Activated CD4-positive, alpha-beta T cell treated with anti-CD3 and anti-CD28 coated beads for 36 hours (primary cell): ENCODE measurements at regions of chr11 and their contacts with region 1.

Region 1: DNA sequence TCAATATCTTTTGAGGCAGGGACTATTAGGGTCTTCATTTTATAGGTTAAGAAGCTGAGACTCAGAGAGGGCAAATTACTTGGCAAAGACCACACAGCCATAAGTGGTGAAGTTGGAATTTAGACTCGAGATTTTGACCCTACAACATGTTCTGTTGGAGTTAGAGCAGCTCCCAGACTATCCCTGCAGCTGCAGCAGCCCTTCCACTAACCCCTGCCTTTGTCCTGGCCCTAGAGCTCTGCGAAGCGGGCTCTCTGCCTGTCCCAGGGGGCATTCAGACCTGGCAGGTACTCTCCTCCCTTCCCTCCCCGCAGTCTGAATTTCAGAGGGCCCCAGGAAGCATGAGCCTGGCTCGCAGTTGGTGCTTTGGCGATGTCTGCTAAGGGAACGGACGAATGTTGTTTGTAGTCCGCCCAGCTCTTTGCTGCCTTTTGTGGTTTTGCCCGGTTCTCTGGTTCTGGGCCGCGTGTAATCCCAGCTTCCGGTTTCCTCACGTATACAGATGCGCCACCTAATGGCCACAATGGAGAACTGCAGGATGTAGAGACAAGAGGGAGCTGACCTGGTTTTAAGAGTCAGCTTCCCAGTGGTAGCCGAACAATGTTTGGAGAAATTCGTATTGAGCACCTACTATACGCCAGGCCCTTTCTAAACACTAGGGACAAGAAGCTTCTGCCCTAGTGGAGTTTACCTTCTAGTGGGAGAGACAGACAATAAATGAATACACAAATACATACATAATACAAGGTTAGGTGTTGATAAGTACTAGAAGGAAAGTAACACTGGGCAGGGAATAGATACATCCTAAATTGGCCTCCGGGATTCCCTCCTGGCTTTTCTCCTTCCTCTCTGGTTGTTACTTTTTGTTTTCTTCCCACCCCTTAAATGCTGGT is 125.2 kb downstream of the ST3GAL4 start:
- DNase-seq: peak; percentile 83
- ATAC-seq: peak; percentile 83
- H3K4me3 Mint-ChIP-seq: no peak overlapping the region
- H3K27ac Mint-ChIP-seq: peak overlapping the region; percentile 81
- H3K4me1 Mint-ChIP-seq: peaks cover 12% of the 10 kb centered on the region
- H3K27me3 Mint-ChIP-seq: no peaks in the 10 kb centered on the region

Region 2: DNA sequence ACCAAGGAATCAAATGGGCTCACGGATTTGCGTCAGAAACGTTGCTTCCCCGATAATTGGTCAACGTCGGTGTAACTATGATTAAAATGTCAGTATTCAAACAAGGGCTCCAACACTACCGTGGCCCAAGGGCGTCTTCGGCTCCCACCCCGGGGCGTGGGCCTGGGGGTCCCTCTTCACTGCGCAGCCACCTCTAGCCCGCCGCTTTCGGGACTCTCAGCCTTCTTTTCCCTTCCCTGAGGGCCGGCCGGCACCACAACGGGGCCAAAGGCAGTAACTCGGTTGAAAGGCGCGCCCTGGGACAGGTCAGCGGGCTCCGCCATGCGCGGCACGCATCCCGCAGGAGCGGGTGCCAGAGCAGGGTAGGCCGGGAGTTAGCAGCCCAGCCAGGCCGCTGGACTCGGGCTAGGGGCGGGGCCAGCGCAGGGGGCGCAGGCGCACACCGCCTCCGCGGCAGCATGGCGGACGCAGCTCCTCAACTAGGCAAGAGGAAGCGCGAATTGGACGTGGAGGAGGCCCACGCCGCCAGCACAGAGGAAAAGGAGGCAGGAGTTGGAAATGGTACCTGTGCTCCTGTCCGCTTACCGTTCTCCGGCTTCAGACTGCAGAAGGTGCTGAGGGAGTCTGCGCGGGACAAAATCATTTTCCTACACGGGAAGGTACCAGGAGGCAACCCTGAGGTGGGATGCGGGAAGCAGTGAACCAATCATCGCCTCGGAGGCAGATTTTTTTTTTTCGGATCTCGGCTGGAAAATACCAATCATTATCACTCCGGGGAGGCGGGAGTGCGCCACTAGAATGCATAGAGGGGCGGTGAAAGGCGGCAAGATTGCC is 176.8 kb before region 1 on chr11 and contains the start of gene DCPS:
- CTCF ChIA-PET with region 1: interaction called, 10 read pairs
- POLR2A ChIA-PET with region 1: no interaction called
- intact Hi-C with region 1: no loop called
- DNase-seq: peak; percentile 92
- ATAC-seq: peak; percentile 93
- H3K4me3 Mint-ChIP-seq: peak within 1 kb of the TSS; percentile 85
- H3K27ac Mint-ChIP-seq: peak within 1 kb of the TSS; percentile 98
- H3K4me1 Mint-ChIP-seq: peaks cover 32% of the 10 kb centered on the region
- H3K27me3 Mint-ChIP-seq: no peaks in the 10 kb centered on the region
- total RNA-seq, gene DCPS: 29.7 to 39.3 TPM

Region 3: DNA sequence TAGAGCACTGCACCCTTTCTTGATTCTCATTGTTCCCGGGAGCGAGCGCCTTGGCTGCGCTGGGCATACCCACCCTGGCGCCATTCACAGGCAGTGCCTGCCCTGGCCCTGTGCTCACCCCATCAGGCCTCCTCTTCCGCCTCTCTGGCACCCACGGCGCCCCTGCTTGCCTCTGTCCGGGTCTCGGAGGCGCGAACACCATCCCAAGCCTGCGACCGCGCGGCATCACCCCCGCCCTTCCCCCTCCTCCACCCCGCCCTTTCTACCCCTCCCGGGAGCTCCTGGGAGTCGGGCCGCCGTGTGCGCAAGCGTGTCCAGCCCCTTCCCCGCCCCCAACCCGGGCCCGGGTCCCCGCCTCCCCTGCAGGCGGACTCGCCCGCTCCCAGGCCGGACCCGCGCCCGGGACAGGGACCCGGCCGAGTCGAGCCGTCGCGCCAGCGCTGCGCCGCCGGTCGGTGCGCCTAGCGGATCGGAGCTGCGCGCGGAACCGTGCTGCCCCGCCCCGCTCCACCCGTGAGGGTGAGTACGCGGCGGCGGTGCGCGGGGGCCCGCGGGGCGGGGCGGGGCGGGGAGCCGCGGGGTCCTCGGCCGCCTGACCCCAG is 125.2 kb before region 1 on chr11 and contains the start of gene ST3GAL4:
- CTCF ChIA-PET with region 1: interaction called, 5 read pairs
- POLR2A ChIA-PET with region 1: no interaction called
- intact Hi-C with region 1: loop called in 1 of 2 experiments (anchors 1 kb)
- DNase-seq: peak; percentile 86
- ATAC-seq: peak; percentile 77
- H3K4me3 Mint-ChIP-seq: peak within 1 kb of the TSS; percentile 93
- H3K27ac Mint-ChIP-seq: peak within 1 kb of the TSS; percentile 88
- H3K4me1 Mint-ChIP-seq: peaks cover 29% of the 10 kb centered on the region
- H3K27me3 Mint-ChIP-seq: no peaks in the 10 kb centered on the region
- total RNA-seq, gene ST3GAL4: 7.5 to 9.1 TPM

Region 4: DNA sequence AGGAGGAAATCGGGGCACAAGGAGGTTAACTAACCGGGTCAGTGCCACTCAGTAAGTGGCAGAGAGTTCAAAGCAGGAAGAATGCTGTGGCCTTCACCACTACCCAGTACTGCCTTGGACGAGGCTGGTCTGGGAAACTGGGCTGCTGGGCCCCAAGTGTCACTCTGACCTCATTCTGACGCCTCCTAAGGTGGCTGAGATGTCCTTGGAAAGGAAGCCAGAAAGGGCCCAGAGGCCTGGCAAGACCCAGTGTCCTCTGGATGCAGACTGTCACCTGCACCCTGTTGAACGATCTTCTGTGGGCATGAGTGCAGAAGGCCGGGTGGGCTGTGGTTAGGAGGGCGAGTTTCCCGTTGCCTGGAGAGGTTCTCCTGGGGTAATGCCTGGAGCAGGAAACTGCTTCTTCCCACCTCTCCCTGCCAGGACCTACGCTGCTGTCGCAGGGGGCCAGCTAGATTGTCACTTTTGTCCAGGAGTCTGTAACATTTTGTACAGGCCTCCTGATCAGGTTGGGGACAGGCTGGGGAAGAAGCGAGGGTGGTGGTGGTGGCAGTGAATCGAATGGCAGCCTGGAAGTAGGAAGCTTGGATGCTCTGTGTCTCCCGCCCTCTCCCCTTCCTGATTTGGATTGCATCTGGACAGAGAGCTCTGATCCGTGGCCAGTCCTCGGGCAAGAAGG is 20.1 kb before region 1 on chr11:
- CTCF ChIA-PET with region 1: interaction called, 15 read pairs
- POLR2A ChIA-PET with region 1: interaction called, 3 read pairs
- intact Hi-C with region 1: no loop called
- DNase-seq: no peak
- ATAC-seq: no peak
- H3K4me3 Mint-ChIP-seq: no peak overlapping the region
- H3K27ac Mint-ChIP-seq: no peak overlapping the region
- H3K4me1 Mint-ChIP-seq: peaks cover 10% of the 10 kb centered on the region
- H3K27me3 Mint-ChIP-seq: peaks cover 2% of the 10 kb centered on the region